Transverse colon (tissue), 4 donors: ENCODE measurements at regions of chr9 and their contacts with region 1.

Region 1: DNA sequence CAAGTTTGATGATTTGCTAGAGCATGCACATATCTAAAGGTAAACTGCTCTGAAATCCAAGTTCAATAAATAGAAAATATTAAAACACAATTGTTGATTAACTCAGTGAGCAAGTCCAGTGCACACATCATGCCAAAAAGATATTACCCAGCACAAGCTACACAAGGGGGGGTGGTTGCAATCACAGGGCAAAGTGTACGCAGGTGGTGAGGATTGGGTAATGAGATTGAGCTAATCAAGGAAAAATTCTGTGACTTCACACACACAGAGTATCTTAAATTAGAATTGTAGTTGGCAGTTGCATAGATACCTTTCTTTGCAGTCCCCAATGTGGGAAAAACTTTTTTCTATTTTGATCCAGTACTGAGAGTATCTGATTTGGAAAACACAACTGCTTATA is 156.1 kb upstream of the NTRK2 start:
- DNase-seq: no peak
- H3K4me3 ChIP-seq: no peak overlapping the region
- H3K27ac ChIP-seq: no peak overlapping the region
- H3K4me1 ChIP-seq: no peaks in the 10 kb centered on the region
- H3K27me3 ChIP-seq: peaks cover 5% of the 10 kb centered on the region
- CTCF ChIP-seq: no peak
- EP300 ChIP-seq: no peak
- POLR2A ChIP-seq: no peak

Region 2: DNA sequence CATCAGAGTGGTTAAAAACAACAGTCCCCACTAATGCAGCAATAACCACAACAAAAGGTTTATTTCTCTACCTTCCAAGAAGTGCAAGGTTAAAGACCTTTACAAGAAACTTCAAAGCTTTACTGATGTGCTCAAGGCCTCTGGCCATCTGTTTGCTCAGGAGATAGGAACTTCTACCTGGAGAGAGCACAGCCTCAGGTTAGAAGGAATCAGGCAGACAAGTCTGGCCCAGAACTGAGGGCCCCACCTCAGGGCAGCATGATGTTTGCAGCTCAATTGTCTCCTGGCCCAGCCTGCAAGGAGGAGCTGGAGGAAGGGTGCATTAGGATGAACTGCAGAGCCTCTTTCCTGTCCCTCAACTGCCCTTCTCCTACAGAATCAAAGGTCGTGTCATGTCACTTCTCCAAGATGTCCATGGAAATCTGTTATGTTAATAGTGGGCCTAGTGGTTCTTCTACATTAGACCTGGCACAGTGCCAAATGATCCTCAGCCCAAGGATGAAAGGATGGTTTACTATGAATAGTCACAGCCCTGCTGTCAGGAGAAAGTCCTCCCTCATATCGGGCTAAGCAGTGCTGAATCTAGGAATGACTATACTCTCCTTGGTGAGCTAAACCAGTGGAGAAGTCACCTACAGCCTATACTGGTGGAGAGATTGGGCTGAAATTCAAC is 57.1 kb after region 1 on chr9:
- in situ Hi-C with region 1: loop called in 1 of 4 experiments (anchors 10 kb)
- intact Hi-C with region 1: no loop called
- DNase-seq: no peak
- H3K4me3 ChIP-seq: no peak overlapping the region
- H3K27ac ChIP-seq: no peak overlapping the region
- H3K4me1 ChIP-seq: no peaks in the 10 kb centered on the region
- H3K27me3 ChIP-seq: no peaks in the 10 kb centered on the region
- CTCF ChIP-seq: no peak
- EP300 ChIP-seq: no peak
- POLR2A ChIP-seq: no peak

Region 3: DNA sequence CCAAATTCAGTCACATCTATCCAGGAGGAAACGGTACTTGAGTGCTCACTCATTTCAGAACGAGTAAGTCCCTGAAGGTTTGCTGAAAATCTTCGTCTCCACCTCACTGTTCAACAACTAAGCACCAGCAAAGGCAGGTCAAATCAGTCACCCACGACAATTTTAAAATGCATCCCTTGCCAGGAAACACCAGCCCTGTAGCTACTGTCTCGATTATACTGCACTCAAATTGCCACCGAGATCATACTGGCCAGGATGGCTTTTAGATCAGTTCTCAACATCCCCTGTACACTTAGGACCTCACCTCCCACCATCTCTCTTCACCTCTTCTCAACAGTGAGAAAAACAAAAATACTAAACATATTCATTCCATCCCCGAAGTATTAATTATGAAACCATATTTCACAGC is 929.7 kb after region 1 on chr9:
- in situ Hi-C with region 1: no loop called
- intact Hi-C with region 1: no loop called
- DNase-seq: no peak
- H3K4me3 ChIP-seq: no peak overlapping the region
- H3K27ac ChIP-seq: no peak overlapping the region
- H3K4me1 ChIP-seq: no peaks in the 10 kb centered on the region
- H3K27me3 ChIP-seq: no peaks in the 10 kb centered on the region
- CTCF ChIP-seq: no peak
- EP300 ChIP-seq: no peak
- POLR2A ChIP-seq: no peak